Transverse colon (tissue), 4 donors: ENCODE measurements at regions of chr2 and their contacts with region 1.

Region 1: GRCh38 chr2:233270366-233270765 is 18.9 kb downstream of the ATG16L1 start:
- DNase-seq: no peak
- H3K4me3 ChIP-seq: no peak overlapping the region
- H3K27ac ChIP-seq: peak overlapping the region in 3 of 4 donors; percentile 11 to 59 (median 38)
- H3K4me1 ChIP-seq: no peaks in the 10 kb centered on the region
- H3K27me3 ChIP-seq: no peaks in the 10 kb centered on the region
- CTCF ChIP-seq: no peak
- EP300 ChIP-seq: no peak
- POLR2A ChIP-seq: no peak

Region 2: GRCh38 chr2:233449921-233450863 is 179.8 kb after region 1 on chr2:
- in situ Hi-C with region 1: loop called in 1 of 4 experiments (anchors 25 kb)
- intact Hi-C with region 1: loop called (anchors 10 kb)
- DNase-seq: peak; percentile 7
- H3K4me3 ChIP-seq: no peak overlapping the region
- H3K27ac ChIP-seq: no peak overlapping the region
- H3K4me1 ChIP-seq: peaks cover 0 to 5% (median 0%) of the 10 kb centered on the region in 4 donors
- H3K27me3 ChIP-seq: no peaks in the 10 kb centered on the region
- CTCF ChIP-seq: no peak
- EP300 ChIP-seq: no peak
- POLR2A ChIP-seq: no peak